ENCODE measurements at regions of chr7 and their contacts with region 1.

Region 1: DNA sequence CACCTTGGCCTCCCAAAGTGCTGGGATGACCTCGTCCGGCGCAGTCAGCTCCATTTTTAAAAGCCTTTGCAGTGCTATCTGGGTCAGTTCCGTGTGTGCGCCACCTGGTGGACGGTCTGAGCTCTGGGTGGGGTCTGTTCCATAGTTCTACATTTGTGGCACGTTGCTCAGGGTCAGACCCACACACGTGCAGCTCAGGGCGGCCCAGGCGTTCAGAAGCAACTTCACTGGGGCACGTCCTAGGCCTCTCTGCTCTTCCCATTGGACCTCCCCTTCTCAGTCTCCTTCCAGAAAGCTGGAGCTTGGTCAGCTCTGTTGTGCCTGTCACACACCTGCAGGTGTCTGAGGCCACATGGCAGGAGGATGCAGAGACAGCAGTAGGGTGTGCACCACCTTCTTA is 137.9 kb downstream of the DNAJB6 start:
- DNase-seq: no peak
- H3K4me3 Mint-ChIP-seq: no peak overlapping the region
- H3K27ac Mint-ChIP-seq: no peak overlapping the region
- H3K4me1 Mint-ChIP-seq: peaks cover 52% of the 10 kb centered on the region
- H3K27me3 Mint-ChIP-seq: no peaks in the 10 kb centered on the region

Region 2: DNA sequence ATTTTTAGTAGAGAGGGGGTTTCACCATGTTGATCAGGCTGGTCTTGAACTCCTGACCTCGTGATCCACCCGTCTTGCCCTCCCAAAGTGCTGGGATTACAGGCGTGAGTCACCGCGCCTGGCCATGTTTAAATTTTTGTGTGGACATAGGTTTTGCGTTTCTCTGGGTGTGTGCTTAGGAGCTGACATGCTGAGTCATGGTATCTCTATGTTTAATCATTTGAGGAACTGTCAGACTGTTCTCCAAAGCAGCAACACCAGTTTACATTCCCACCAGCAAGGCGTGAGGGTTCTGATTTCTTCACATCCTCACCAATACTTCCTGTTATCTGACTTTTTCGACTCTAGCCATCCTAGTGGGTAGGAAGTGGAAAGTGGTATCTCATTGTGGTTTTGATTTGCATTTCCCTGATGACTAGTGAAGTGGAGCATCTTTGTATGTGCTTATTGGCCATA is 15.8 kb after region 1 on chr7:
- CTCF ChIA-PET with region 1: interaction called, 6 read pairs
- intact Hi-C with region 1: loop called (anchors 1 kb)
- DNase-seq: peak; percentile 63
- H3K4me3 Mint-ChIP-seq: no peak overlapping the region
- H3K27ac Mint-ChIP-seq: peak overlapping the region; percentile 36
- H3K4me1 Mint-ChIP-seq: peaks cover 30% of the 10 kb centered on the region
- H3K27me3 Mint-ChIP-seq: peaks cover 8% of the 10 kb centered on the region

Measured in activated naive CD4-positive, alpha-beta T cell treated with anti-CD3 and anti-CD28 coated beads for 36 hours (primary cell).